ENCODE measurements at regions of chr17 and their contacts with region 1.

Region 1: GRCh38 chr17:44324571-44325275 is at the start of gene SLC25A39:
- DNase-seq: peak; percentile 89
- H3K4me3 Mint-ChIP-seq: peak within 1 kb of the TSS; percentile 82
- H3K27ac Mint-ChIP-seq: peak within 1 kb of the TSS; percentile 93
- H3K4me1 Mint-ChIP-seq: no peaks in the 10 kb centered on the region
- H3K27me3 Mint-ChIP-seq: no peaks in the 10 kb centered on the region
- CTCF ChIP-seq: no peak
- total RNA-seq, gene SLC25A39: 157 and 169 TPM in 2 replicates

Region 2: GRCh38 chr17:44199553-44200477 is 124.9 kb before region 1 on chr17 and contains the start of gene ATXN7L3:
- CTCF ChIA-PET with region 1: no interaction called
- POLR2A ChIA-PET with region 1: interaction called, 6 read pairs
- intact Hi-C with region 1: loop called (anchors 1 kb)
- DNase-seq: peak; percentile 97
- H3K4me3 Mint-ChIP-seq: peak within 1 kb of the TSS; percentile 89
- H3K27ac Mint-ChIP-seq: peak within 1 kb of the TSS; percentile 95
- H3K4me1 Mint-ChIP-seq: peaks cover 45% of the 10 kb centered on the region
- H3K27me3 Mint-ChIP-seq: no peaks in the 10 kb centered on the region
- CTCF ChIP-seq: no peak
- total RNA-seq, gene ATXN7L3: 65.7 and 74.8 TPM in 2 replicates

Region 3: GRCh38 chr17:44272321-44272951 is 52.3 kb before region 1 on chr17:
- CTCF ChIA-PET with region 1: no interaction called
- POLR2A ChIA-PET with region 1: no interaction called
- intact Hi-C with region 1: no loop called
- DNase-seq: no peak
- H3K4me3 Mint-ChIP-seq: no peak overlapping the region
- H3K27ac Mint-ChIP-seq: no peak overlapping the region
- H3K4me1 Mint-ChIP-seq: peaks cover 9% of the 10 kb centered on the region
- H3K27me3 Mint-ChIP-seq: peaks cover 14% of the 10 kb centered on the region
- CTCF ChIP-seq: no peak

Measured in MCF 10A (cell line).